ENCODE measurements at regions of chr3 and their contacts with region 1.

Region 1: DNA sequence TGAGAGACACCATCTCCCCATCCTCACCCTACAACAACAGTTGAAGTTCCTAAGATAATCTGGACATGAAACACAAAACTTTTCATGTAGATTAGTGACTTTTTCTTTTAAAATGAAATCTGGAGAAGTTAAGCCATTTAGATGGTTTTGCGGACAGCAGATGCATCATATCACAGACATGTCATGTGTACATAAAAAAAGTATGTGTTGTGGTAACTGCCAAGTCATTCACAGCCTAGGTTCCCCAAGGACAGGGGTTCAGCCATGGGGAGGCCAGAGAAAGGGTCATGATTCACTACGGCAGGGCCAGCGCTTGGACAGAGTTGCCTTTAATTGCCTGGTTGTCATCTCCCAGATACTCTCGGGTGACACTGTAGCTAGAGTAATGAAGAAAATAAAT is 163.2 kb downstream of the PDZRN3 start:
- DNase-seq: no peak
- H3K4me3 ChIP-seq: no peak overlapping the region
- H3K27ac ChIP-seq: no peak overlapping the region
- H3K4me1 ChIP-seq: peaks cover 0 to 30% (median 2%) of the 10 kb centered on the region in 4 donors
- H3K27me3 ChIP-seq: no peaks in the 10 kb centered on the region
- CTCF ChIP-seq: no peak

Region 2: GRCh38 chr3:73422571-73422970 is 39.0 kb before region 1 on chr3:
- intact Hi-C with region 1: loop called (anchors 5 kb)
- DNase-seq: no peak
- H3K4me3 ChIP-seq: no peak overlapping the region
- H3K27ac ChIP-seq: peak overlapping the region; percentile 16 to 18
- H3K4me1 ChIP-seq: peaks cover 0 to 69% (median 39%) of the 10 kb centered on the region in 4 donors
- H3K27me3 ChIP-seq: no peaks in the 10 kb centered on the region
- CTCF ChIP-seq: no peak

Measured in tibial artery (tissue), 4 donors.